ENCODE measurements at regions of chr7 and their contacts with region 1.

Region 1: DNA sequence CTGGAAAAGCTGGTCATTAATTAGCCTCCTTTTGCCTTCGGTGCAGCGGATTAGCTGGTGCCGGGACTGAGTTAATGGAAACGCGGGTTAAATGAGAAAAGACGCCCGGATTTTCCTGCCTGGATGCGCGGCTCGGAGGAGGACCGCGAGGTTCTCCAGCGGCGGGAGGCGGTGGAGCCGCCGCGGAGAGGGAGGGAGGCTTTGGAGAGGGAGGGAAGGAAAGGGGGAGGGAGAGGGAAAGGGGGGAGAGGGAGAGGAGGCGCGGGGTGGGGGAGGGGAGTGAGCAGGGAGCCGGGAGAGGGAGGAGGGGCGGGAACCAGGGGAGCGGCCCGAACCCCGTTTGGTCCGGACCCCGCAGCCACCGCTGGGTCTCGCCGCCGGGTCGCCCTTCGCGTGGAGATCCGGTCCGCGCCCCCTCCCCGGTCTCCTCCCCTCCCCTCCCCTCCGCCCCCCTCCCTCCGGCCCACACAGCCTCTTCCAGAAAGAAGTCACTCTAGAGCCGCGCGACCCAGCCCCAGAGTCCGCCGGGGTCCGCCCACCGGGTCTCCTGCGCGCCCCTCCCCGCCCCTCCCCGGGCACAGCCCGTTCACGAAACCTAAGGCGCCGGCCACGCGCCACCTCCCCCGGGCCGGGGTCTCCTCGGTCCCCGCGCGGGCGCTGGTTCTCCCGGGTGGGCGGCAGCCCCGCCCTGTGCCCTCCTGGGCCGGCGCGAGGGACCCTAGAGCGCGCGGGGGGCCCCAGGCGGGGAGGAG is 347.5 kb downstream of the DNAJB6 start:
- DNase-seq: peak in 5 of 10 donors; percentile 13 to 81 (median 74)

Region 2: GRCh38 chr7:157601530-157601929 is 82.8 kb before region 1 on chr7:
- intact Hi-C with region 1: loop called (anchors 10 kb)
- DNase-seq: peak; percentile 42 to 95 (median 63)

Region 3: GRCh38 chr7:157932498-157933218 is 248.3 kb after region 1 on chr7:
- intact Hi-C with region 1: no loop called
- DNase-seq: no peak

Measured in posterior cingulate gyrus (tissue), 11 donors.